PC-9 (cell line): ENCODE measurements at regions of chr4 and their contacts with region 1.

Region 1: DNA sequence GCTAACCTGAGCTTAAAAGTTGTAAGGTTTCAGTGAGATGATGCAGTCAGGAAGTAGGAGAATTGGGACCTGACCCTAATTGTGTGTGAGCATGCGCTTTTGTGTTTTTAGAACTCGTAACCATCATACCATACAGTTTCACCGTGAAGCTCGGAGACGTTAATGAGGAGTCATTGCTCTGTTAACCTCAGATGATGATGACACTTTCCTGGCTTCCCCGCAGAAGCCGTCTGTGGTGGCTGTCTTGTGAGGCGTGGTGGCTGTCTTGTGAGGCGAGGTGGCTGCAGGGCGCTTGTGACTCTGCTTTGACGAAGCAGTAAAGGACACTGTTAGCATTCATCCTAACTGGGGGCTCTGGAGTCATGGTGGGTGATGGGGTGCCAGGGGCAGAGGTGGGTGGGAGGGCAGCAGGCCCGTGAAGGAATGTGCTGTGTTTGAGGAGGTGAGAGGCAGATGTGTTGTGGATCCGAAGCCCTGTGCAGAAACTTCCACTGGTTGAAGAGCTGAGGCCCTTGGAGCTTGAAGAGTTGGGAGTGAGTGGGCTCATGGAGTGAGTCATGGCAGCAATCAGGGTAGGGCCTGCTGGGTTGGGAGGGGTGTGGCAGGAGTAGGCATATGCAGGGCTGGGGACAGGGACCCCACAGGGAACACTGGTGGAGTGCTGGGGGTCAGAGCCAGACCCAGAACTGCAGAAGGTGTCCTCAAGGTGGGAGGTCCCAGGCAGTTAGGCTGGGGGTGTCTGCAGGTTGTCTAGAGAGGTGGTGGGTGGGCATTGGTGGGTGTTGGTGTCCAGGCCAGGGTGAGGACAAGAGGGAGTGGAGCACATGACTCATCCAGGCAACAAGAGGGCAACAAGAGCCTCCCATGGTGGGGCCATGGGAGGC is 57.4 kb downstream of the NSD2 start:
- DNase-seq: no peak
- H3K4me3 ChIP-seq: no peak overlapping the region
- H3K27ac ChIP-seq: no peak overlapping the region
- H3K4me1 ChIP-seq: peaks cover 7% of the 10 kb centered on the region; the same call in 1 of the 2 replicates
- H3K27me3 ChIP-seq: no peaks in the 10 kb centered on the region
- CTCF ChIP-seq: no peak

Region 2: GRCh38 chr4:1683736-1684505 is 244.7 kb before region 1 on chr4 and contains the start of gene FAM53A:
- CTCF ChIA-PET with region 1: interaction called, 21 read pairs
- POLR2A ChIA-PET with region 1: no interaction called
- intact Hi-C with region 1: no loop called
- DNase-seq: peak; percentile 56 to 96
- H3K4me3 ChIP-seq: peak within 1 kb of the TSS; percentile 62
- H3K27ac ChIP-seq: no peak within 1 kb of the TSS
- H3K4me1 ChIP-seq: 0 out of 2 replicates have a peak, but pooled peaks cover 5% of the 10 kb centered on the region
- H3K27me3 ChIP-seq: no peaks in the 10 kb centered on the region
- CTCF ChIP-seq: no peak
- total RNA-seq, gene FAM53A: 4.0 and 6.7 TPM in 2 replicates

Region 3: DNA sequence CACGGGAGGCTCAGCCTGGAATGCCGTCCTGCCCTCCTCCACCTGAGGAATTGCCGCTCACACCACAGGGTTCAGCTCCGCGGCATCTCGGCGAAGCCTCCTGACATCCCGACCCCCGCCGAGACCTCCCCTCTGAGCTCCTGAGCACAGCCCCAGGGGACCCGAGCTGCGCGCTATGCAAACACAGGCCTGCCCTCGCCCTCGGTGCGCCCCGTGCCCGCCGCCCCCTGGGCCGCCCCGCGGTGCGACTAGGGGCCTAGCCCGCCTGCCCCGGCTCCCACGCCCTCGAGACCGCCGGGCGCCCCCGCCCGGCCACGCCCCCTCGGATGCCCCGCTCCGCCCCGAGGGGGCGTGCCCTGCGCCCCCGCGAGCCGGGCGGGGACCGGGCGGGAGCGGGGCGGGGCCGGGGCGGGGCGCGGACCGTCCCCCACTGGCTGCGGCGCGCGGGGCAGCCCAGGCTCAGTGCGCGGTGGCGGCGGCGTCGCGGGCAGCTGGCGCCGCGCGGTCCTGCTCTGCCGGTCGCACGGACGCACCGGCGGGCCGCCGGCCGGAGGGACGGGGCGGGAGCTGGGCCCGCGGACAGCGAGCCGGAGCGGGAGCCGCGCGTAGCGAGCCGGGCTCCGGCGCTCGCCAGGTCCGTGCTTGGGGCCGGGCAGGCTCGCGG is 135.6 kb before region 1 on chr4 and contains the start of gene FGFR3:
- CTCF ChIA-PET with region 1: interaction called, 10 read pairs
- POLR2A ChIA-PET with region 1: no interaction called
- intact Hi-C with region 1: no loop called
- DNase-seq: peak in 1 of 2 experiments; percentile 59
- H3K4me3 ChIP-seq: peak within 1 kb of the TSS; percentile 52; the same call in 1 of the 2 replicates
- H3K27ac ChIP-seq: no peak within 1 kb of the TSS
- H3K4me1 ChIP-seq: peaks cover 7% of the 10 kb centered on the region; the same call in 1 of the 2 replicates
- H3K27me3 ChIP-seq: peaks cover 31% of the 10 kb centered on the region
- CTCF ChIP-seq: no peak
- total RNA-seq, gene FGFR3: 8.2 and 10.6 TPM in 2 replicates

Region 4: DNA sequence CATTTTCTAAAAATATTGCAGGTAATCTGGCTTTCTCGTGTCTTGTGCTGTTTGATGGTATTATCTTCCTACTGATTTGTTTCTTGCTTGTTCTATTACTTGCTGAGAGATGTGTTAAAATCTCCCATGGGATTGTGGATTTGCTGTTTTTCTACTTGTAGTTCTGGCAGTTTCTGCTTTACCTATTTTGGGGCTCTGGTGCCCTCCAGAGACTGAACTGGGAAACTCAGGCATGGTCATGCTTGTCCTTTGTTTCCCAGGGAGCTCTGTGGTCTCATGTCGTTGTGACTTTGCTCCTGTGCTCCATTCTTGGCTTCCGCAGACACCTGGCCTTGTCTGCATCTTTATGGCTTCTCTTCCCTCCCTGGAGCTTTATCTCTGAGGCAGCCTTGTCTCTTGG is 18.0 kb before region 1 on chr4:
- CTCF ChIA-PET with region 1: interaction called, 6 read pairs
- POLR2A ChIA-PET with region 1: interaction called, 12 read pairs
- intact Hi-C with region 1: no loop called
- DNase-seq: peak in 1 of 2 experiments; percentile 32
- H3K4me3 ChIP-seq: no peak overlapping the region
- H3K27ac ChIP-seq: no peak overlapping the region
- H3K4me1 ChIP-seq: no peaks in the 10 kb centered on the region
- H3K27me3 ChIP-seq: no peaks in the 10 kb centered on the region
- CTCF ChIP-seq: peak; percentile 68